Activated CD4-positive, alpha-beta memory T cell treated with anti-CD3 and anti-CD28 coated beads for 36 hours (primary cell): ENCODE measurements at regions of chr12 and their contacts with region 1.

Region 1: GRCh38 chr12:57476162-57476992 is 3.3 kb downstream of the ARHGAP9 start:
- DNase-seq: peak; percentile 94
- H3K4me3 Mint-ChIP-seq: peak overlapping the region; percentile 87
- H3K27ac Mint-ChIP-seq: peak overlapping the region; percentile 99
- H3K4me1 Mint-ChIP-seq: peaks cover 60% of the 10 kb centered on the region
- H3K27me3 Mint-ChIP-seq: no peaks in the 10 kb centered on the region

Region 2: GRCh38 chr12:57487597-57488401 is 11.4 kb after region 1 on chr12 and contains the start of gene MARS1:
- CTCF ChIA-PET with region 1: interaction called, 14 read pairs
- POLR2A ChIA-PET with region 1: interaction called, 14 read pairs
- intact Hi-C with region 1: loop called (anchors 1 kb)
- DNase-seq: peak; percentile 96
- H3K4me3 Mint-ChIP-seq: peak within 1 kb of the TSS; percentile 97
- H3K27ac Mint-ChIP-seq: peak within 1 kb of the TSS; percentile 94
- H3K4me1 Mint-ChIP-seq: peaks cover 40% of the 10 kb centered on the region
- H3K27me3 Mint-ChIP-seq: no peaks in the 10 kb centered on the region
- total RNA-seq, gene MARS1: 354 to 364 TPM

Region 3: GRCh38 chr12:57693659-57694458 is 217.5 kb after region 1 on chr12 and contains the start of gene OS9:
- CTCF ChIA-PET with region 1: no interaction called
- POLR2A ChIA-PET with region 1: no interaction called
- intact Hi-C with region 1: loop called (anchors 5 kb)
- DNase-seq: peak; percentile 97
- H3K4me3 Mint-ChIP-seq: no peak within 1 kb of the TSS
- H3K27ac Mint-ChIP-seq: no peak within 1 kb of the TSS
- H3K4me1 Mint-ChIP-seq: no peaks in the 10 kb centered on the region
- H3K27me3 Mint-ChIP-seq: peaks cover under 1% of the 10 kb centered on the region
- total RNA-seq, gene OS9: 73.4 to 74.8 TPM